Left ventricle myocardium superior (tissue), 1 donor: ENCODE measurements at regions of chr7 and their contacts with region 1.

Region 1: DNA sequence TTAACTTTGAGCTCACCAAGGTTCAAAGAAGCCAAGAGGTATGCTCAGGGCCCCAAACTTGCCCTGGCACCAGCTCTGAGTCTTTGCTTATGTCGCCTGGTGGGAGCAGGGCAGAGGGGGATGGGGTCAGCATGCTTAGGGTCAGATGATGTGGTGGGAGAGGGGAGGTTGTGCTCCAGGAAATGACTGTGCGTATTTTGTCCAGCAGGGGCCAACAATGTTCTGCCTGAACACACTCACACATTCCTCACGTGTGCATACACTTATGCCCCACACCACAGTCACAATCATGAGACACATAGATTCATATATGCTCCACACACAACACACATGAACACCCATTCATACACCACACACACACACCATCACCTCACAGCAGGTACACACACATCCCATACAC is 4.4 kb upstream of the RAMP3 start:
- DNase-seq: no peak
- ATAC-seq: no peak

Region 2: DNA sequence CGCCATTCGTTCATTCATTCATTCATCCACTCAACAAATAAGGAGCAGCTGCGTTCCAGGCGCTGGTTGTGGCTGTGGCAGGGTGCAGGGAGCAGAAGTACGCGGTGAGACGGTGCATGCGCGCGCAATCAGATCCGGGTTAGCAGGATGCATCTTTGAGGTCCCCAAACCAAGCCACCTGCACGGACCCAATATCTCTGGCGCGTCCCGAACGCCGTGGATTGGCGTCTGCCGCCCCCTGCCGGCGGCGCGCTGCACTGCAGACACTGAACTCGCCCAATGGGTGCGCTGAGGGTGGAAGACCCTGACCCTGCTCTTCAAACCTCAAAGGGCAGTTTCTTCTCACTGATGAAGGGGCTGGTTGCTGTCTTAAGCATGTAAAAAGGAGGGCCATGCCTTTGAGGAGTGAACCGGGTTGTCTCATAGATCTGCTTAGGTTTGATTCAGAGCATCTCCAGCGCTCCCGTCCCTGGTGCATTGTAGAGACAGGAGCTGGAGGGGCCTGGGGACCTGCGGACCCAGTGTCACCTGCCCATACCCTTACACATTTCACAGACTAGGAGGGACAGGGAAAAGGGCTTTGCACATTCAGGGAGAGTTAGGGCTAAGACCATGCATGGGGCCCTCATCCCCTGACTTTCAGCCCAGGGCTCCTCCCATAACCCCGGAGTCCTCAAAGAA is 106.9 kb after region 1 on chr7:
- intact Hi-C with region 1: loop called (anchors 5 kb)
- DNase-seq: peak; percentile 79
- ATAC-seq: peak; percentile 83